ENCODE measurements at regions of chr10 and their contacts with region 1.

Region 1: DNA sequence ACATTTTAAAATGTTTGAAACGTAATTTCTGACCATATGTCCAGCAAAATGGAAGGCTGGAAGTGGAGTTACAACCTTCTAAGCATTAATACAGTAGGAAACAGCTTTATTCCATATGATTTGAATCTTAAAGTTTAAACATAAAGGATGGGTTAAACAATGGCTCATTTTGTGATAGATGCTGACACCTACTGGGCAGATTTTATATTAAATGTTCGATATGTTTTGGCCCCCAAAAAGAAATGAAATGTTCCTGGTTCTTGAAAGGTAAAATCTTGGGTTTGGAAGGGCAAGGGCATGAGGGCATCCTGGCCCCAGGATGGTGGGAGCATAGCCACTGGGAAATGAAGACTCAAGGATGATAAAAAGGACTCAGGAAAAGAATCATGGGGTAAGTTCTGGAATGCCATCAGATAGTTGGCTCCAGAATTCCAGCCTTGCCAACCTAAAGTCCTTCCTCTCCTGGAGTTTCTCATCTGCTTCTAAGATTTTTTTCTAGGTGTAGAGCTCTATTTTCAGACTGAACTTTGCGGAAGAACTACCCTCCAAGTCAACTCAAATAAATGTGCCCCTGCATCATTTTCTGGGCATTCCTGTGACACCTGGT is 34.6 kb upstream of the SLC35G1 start:
- DNase-seq: peak; percentile 32
- H3K4me3 ChIP-seq: no peak overlapping the region
- H3K27ac ChIP-seq: no peak overlapping the region
- H3K4me1 ChIP-seq: peaks cover 7% of the 10 kb centered on the region
- H3K27me3 ChIP-seq: peaks cover 2 to 4% of the 10 kb centered on the region in 2 experiments
- CTCF ChIP-seq: peak in 1 of 2 donors; percentile 9
- POLR2A ChIP-seq: no peak

Region 2: GRCh38 chr10:93702211-93703001 is 156.7 kb before region 1 on chr10 and contains the start of gene FRA10AC1:
- CTCF ChIA-PET with region 1: no interaction called
- POLR2A ChIA-PET with region 1: no interaction called
- dilution Hi-C with region 1: no loop called
- intact Hi-C with region 1: loop called (anchors 5 kb)
- DNase-seq: peak; percentile 91
- H3K4me3 ChIP-seq: peak within 1 kb of the TSS; percentile 68 to 94 (median 88)
- H3K27ac ChIP-seq: peak within 1 kb of the TSS; percentile 74
- H3K4me1 ChIP-seq: peaks cover 9% of the 10 kb centered on the region
- H3K27me3 ChIP-seq: peaks cover 0 to 4% of the 10 kb centered on the region in 2 experiments
- CTCF ChIP-seq: peak; percentile 12 to 21
- POLR2A ChIP-seq: no peak
- total RNA-seq, gene FRA10AC1: 17.2 and 24.4 TPM in 2 replicates